Kidney (tissue), 22 donors: ENCODE measurements at regions of chr12 and their contacts with region 1.

Region 1: GRCh38 chr12:51891843-51892242 is 3.9 kb downstream of the ANKRD33 start:
- DNase-seq: no peak
- H3K4me3 ChIP-seq: no peak overlapping the region
- H3K27ac ChIP-seq: no peak overlapping the region
- H3K4me1 ChIP-seq: peaks cover 0 to 7% (median 6%) of the 10 kb centered on the region in 3 donors
- H3K27me3 ChIP-seq: no peaks in the 10 kb centered on the region
- CTCF ChIP-seq: peak; percentile 11

Region 2: GRCh38 chr12:51460519-51460918 is 431.3 kb before region 1 on chr12:
- intact Hi-C with region 1: no loop called
- DNase-seq: no peak
- H3K4me3 ChIP-seq: no peak overlapping the region
- H3K27ac ChIP-seq: no peak overlapping the region
- H3K4me1 ChIP-seq: no peaks in the 10 kb centered on the region
- H3K27me3 ChIP-seq: no peaks in the 10 kb centered on the region
- CTCF ChIP-seq: no peak

Region 3: GRCh38 chr12:51980051-51980808 is 88.4 kb after region 1 on chr12:
- intact Hi-C with region 1: loop called (anchors 10 kb)
- DNase-seq: peak; percentile 69 to 88 (median 83)
- H3K4me3 ChIP-seq: no peak overlapping the region
- H3K27ac ChIP-seq: peak overlapping the region; percentile 10 to 65
- H3K4me1 ChIP-seq: peaks cover 8 to 33% (median 23%) of the 10 kb centered on the region in 3 donors
- H3K27me3 ChIP-seq: no peaks in the 10 kb centered on the region
- CTCF ChIP-seq: peak; percentile 98